ENCODE measurements at regions of chr2 and their contacts with region 1.

Region 1: GRCh38 chr2:152036611-152037469 is 62.0 kb downstream of the CACNB4 start:
- DNase-seq: peak; percentile 80
- H3K4me3 ChIP-seq: no peak overlapping the region
- H3K27ac ChIP-seq: peak overlapping the region in 2 of 4 donors; percentile 43 to 53
- H3K4me1 ChIP-seq: peaks cover 0 to 21% (median 20%) of the 10 kb centered on the region in 4 donors
- H3K27me3 ChIP-seq: no peaks in the 10 kb centered on the region
- CTCF ChIP-seq: peak in 3 of 4 experiments; percentile 68 to 75 (median 68)
- EP300 ChIP-seq: no peak
- POLR2A ChIP-seq: no peak

Region 2: DNA sequence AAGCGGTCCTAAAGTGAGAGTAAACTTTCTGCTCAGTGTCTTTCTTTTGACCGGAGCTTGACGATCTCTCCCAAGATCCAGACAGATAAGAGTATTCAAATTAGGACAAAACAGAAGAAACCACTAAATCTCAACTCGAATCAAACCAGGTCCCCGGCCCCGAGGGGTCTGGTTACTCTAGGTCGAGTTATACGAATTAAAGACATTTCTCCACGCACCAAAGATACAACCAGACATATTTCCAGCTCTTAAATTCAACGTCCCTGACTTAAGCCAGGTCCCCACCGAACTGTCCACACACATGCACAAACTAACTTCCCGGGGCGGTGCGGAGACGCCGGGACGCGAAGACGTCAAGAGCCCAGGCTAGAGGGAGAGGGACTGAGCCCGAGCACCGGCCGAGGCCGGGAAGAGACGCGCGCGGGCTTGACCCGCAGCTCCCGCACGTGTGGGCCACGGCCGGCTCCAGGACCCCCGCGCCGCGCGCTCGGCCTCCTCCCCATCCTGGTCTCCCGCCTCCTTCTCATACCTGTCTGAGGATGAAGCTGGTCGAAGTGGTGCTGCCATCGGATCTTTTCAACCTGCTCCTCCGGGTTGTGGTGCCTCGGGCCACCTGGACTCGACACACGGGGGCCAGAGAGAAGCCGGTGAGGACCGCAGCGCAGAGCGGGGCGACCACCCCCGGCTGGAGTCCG is 61.1 kb after region 1 on chr2:
- intact Hi-C with region 1: loop called (anchors 10 kb)
- DNase-seq: peak; percentile 72
- H3K4me3 ChIP-seq: peak overlapping the region; percentile 48 to 75 (median 65)
- H3K27ac ChIP-seq: peak overlapping the region; percentile 11 to 59 (median 42)
- H3K4me1 ChIP-seq: peaks cover 0 to 26% (median 14%) of the 10 kb centered on the region in 4 donors
- H3K27me3 ChIP-seq: peaks cover 0 to 37% (median 0%) of the 10 kb centered on the region in 3 donors
- CTCF ChIP-seq: no peak
- EP300 ChIP-seq: no peak
- POLR2A ChIP-seq: no peak

Region 3: DNA sequence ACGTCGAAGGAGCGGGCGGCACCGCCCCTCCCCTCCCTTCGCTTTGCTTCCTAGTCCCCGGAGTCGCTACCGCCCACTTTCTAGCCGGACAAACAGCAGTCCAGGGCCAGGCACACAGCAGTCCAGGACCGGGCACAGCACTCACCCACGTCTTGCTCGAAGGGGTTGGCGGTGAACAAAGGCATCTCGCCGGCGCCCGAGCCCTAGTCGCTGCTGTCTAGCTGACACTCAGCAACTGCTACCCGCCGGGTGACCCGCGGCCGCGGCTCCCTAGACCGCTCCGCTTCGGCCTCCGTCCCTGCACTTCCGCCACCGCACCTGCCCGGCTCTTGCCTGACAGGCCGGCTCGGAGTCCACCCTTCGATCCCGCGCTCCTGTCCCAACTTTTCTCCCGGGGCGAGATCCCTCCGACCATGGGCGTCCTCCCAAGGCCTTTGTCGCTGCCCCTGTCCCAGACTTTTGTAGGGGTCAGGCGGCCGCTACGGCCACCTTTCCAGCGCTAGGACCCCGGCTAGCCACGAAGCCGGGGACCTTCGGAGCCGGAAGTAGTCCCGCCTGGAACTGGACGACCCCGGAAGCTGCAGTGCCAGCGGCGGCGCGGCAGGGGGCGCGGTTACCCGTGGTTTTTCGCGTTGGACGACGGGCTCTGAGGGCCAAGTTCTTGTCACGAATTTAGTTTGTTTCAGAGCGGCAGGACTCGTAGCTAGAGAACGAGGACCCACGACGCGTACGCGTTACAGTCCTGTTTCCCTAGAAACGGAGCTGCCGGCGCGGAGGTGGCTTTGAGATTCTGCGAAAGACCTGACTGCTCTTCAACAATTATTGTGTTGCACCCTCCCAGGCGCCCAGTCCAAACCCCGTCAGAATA is 138.9 kb after region 1 on chr2 and contains the start of gene STAM2:
- intact Hi-C with region 1: loop called (anchors 5 kb)
- DNase-seq: peak; percentile 95
- H3K4me3 ChIP-seq: peak within 1 kb of the TSS; percentile 64 to 94 (median 77)
- H3K27ac ChIP-seq: peak within 1 kb of the TSS; percentile 89 to 98 (median 96)
- H3K4me1 ChIP-seq: peaks cover 0 to 34% (median 23%) of the 10 kb centered on the region in 4 donors
- H3K27me3 ChIP-seq: no peaks in the 10 kb centered on the region
- CTCF ChIP-seq: peak; percentile 82 to 94 (median 88)
- EP300 ChIP-seq: peak in 1 of 4 donors; percentile 8
- POLR2A ChIP-seq: peak; percentile 71 to 77
- total RNA-seq, gene STAM2: 26.3 to 36.7 (median 33.5) TPM

Region 4: GRCh38 chr2:152611458-152612231 is 574.8 kb after region 1 on chr2:
- intact Hi-C with region 1: no loop called
- DNase-seq: peak; percentile 77
- H3K4me3 ChIP-seq: no peak overlapping the region
- H3K27ac ChIP-seq: peak overlapping the region; percentile 25 to 64 (median 54)
- H3K4me1 ChIP-seq: peaks cover 0 to 5% (median 0%) of the 10 kb centered on the region in 4 donors
- H3K27me3 ChIP-seq: no peaks in the 10 kb centered on the region
- CTCF ChIP-seq: no peak
- EP300 ChIP-seq: no peak
- POLR2A ChIP-seq: no peak

Region 5: GRCh38 chr2:152635635-152636298 is 598.9 kb after region 1 on chr2:
- intact Hi-C with region 1: loop called (anchors 5 kb)
- DNase-seq: peak; percentile 67
- H3K4me3 ChIP-seq: no peak overlapping the region
- H3K27ac ChIP-seq: no peak overlapping the region
- H3K4me1 ChIP-seq: no peaks in the 10 kb centered on the region
- H3K27me3 ChIP-seq: no peaks in the 10 kb centered on the region
- CTCF ChIP-seq: peak; percentile 54 to 88 (median 72)
- EP300 ChIP-seq: no peak
- POLR2A ChIP-seq: no peak

Region 6: GRCh38 chr2:153519257-153519875 is 1482.5 kb after region 1 on chr2:
- intact Hi-C with region 1: loop called (anchors 10 kb)
- DNase-seq: no peak
- H3K4me3 ChIP-seq: no peak overlapping the region
- H3K27ac ChIP-seq: no peak overlapping the region
- H3K4me1 ChIP-seq: no peaks in the 10 kb centered on the region
- H3K27me3 ChIP-seq: no peaks in the 10 kb centered on the region
- CTCF ChIP-seq: peak; percentile 35 to 79 (median 66)
- EP300 ChIP-seq: no peak
- POLR2A ChIP-seq: no peak

Measured in sigmoid colon (tissue), 7 donors.